CD4-positive, alpha-beta T cell (primary cell): ENCODE measurements at regions of chr13 and their contacts with region 1.

Region 1: GRCh38 chr13:111184458-111185401 is 69.6 kb downstream of the ARHGEF7 start:
- DNase-seq: peak in 13 of 14 experiments; percentile 19 to 73 (median 45)
- ATAC-seq: peak; percentile 55
- H3K4me3 ChIP-seq: peak overlapping the region; percentile 15
- H3K4me3 Mint-ChIP-seq: peak overlapping the region; percentile 78
- H3K27ac ChIP-seq: peak overlapping the region; percentile 46 to 58
- H3K27ac Mint-ChIP-seq: peak overlapping the region; percentile 94
- H3K4me1 ChIP-seq: peaks cover 89% of the 10 kb centered on the region
- H3K4me1 Mint-ChIP-seq: peaks cover 98% of the 10 kb centered on the region
- H3K27me3 ChIP-seq: no peaks in the 10 kb centered on the region
- H3K27me3 Mint-ChIP-seq: no peaks in the 10 kb centered on the region
- CTCF ChIP-seq: no peak

Region 2: DNA sequence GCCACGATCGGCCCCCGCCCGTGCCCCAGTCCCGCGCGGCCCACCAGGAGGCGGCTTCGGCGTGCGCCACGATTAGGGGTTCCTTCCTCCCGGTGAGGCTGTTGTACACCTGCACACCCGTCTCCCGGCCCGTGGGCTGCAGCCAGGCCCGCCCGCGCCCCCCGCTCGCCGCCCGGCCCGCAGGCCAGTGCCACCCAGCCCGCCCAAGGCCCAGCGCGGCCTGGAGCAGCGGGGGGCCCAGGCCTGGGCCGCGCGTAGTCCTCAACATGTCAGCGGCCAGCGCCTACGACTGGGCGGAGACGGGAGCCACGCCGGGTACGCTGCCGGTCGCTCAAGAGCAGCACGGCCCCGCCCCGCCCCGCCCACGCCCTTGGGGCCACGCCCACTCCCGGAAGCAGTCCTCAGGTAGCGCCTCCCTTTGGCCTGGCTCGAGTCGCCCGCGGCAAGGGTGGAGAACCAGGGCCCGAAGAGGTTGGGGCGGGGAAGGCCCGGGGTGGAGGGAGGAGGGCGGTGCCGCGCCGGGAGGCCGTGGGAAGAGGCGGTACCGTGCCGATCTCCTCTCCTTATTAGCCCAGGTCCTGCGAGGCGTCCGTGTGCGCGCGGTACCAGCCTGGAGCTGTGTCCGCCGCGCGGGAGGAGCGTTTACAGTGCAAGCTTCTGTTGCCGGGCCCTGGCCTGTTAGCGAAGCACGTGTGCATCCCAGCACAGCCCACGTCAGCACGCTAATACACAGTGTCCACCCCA is 478.7 kb before region 1 on chr13 and contains the start of gene CARS2:
- CTCF ChIA-PET with region 1: no interaction called
- POLR2A ChIA-PET with region 1: no interaction called
- intact Hi-C with region 1: loop called in 1 of 2 experiments (anchors 10 kb)
- DNase-seq: peak; percentile 83 to 98 (median 91)
- ATAC-seq: peak; percentile 91
- H3K4me3 ChIP-seq: peak within 1 kb of the TSS; percentile 71
- H3K4me3 Mint-ChIP-seq: peak within 1 kb of the TSS; percentile 94
- H3K27ac ChIP-seq: peak within 1 kb of the TSS in 1 of 2 donors; percentile 35
- H3K27ac Mint-ChIP-seq: peak within 1 kb of the TSS; percentile 92
- H3K4me1 ChIP-seq: peaks cover 41% of the 10 kb centered on the region
- H3K4me1 Mint-ChIP-seq: peaks cover 43% of the 10 kb centered on the region
- H3K27me3 ChIP-seq: no peaks in the 10 kb centered on the region
- H3K27me3 Mint-ChIP-seq: no peaks in the 10 kb centered on the region
- CTCF ChIP-seq: no peak
- total RNA-seq, gene CARS2: 50.2 to 56.5 TPM

Region 3: DNA sequence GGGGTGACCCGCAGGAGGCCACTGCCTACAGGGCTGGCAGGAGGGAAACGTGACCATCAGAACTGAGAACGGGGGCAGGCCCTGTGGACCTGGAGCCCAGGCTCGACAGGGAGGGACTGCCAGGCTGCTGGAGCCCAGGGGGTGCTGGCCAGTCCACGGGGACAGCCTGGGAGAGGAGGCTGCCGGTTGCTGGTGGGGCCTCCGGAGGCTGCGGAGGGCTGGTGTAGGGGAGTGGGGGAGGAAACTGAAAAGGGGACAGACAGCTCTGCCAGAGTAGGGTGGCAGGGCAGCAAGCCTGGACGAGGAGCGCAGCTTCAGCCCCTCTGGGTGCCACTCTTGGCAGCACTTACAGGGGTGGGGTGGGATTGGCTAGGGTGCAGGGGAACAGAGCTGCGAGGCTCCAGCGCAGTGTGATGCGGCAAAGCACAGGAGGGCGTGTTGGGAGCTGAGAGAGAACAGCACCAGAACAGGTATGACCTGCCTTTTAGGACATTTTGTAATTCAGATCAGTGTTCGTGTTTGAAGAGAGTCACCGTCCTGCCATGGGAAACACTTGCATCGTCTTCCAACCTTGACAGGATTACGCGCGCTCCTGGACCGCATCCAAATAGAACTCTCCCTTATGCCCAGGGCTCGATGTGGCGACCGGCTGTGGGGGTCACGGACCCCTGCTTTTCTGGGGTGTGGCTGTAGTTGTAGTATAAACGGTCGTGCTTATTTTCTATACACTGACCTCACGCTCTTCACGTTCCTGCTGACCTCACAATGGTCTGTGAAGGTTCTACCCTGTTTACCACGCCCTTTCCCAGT is 89.5 kb before region 1 on chr13:
- CTCF ChIA-PET with region 1: no interaction called
- POLR2A ChIA-PET with region 1: no interaction called
- intact Hi-C with region 1: no loop called
- DNase-seq: no peak
- ATAC-seq: no peak
- H3K4me3 ChIP-seq: no peak overlapping the region
- H3K4me3 Mint-ChIP-seq: no peak overlapping the region
- H3K27ac ChIP-seq: no peak overlapping the region
- H3K27ac Mint-ChIP-seq: no peak overlapping the region
- H3K4me1 ChIP-seq: no peaks in the 10 kb centered on the region
- H3K4me1 Mint-ChIP-seq: no peaks in the 10 kb centered on the region
- H3K27me3 ChIP-seq: peaks cover 0 to 12% of the 10 kb centered on the region in 2 experiments
- H3K27me3 Mint-ChIP-seq: peaks cover 77% of the 10 kb centered on the region
- CTCF ChIP-seq: no peak

Region 4: GRCh38 chr13:111202745-111203144 is 18.0 kb after region 1 on chr13:
- CTCF ChIA-PET with region 1: interaction called, 3 read pairs
- POLR2A ChIA-PET with region 1: interaction called, 17 read pairs
- intact Hi-C with region 1: loop called in 1 of 2 experiments (anchors 2 kb)
- DNase-seq: peak in 5 of 14 experiments; percentile 34 to 61 (median 50)
- ATAC-seq: peak; percentile 91
- H3K4me3 ChIP-seq: no peak overlapping the region
- H3K4me3 Mint-ChIP-seq: peak overlapping the region; percentile 68
- H3K27ac ChIP-seq: no peak overlapping the region
- H3K27ac Mint-ChIP-seq: peak overlapping the region; percentile 88
- H3K4me1 ChIP-seq: peaks cover 38% of the 10 kb centered on the region
- H3K4me1 Mint-ChIP-seq: peaks cover 82% of the 10 kb centered on the region
- H3K27me3 ChIP-seq: no peaks in the 10 kb centered on the region
- H3K27me3 Mint-ChIP-seq: no peaks in the 10 kb centered on the region
- CTCF ChIP-seq: no peak

Region 5: GRCh38 chr13:111216166-111216960 is 31.6 kb after region 1 on chr13:
- CTCF ChIA-PET with region 1: interaction called, 6 read pairs
- POLR2A ChIA-PET with region 1: interaction called, 5 read pairs
- intact Hi-C with region 1: loop called in 1 of 2 experiments (anchors 5 kb)
- DNase-seq: peak; percentile 19 to 68 (median 38)
- ATAC-seq: peak; percentile 69
- H3K4me3 ChIP-seq: no peak overlapping the region
- H3K4me3 Mint-ChIP-seq: no peak overlapping the region
- H3K27ac ChIP-seq: no peak overlapping the region
- H3K27ac Mint-ChIP-seq: peak overlapping the region; percentile 73
- H3K4me1 ChIP-seq: peaks cover 7% of the 10 kb centered on the region
- H3K4me1 Mint-ChIP-seq: peaks cover 64% of the 10 kb centered on the region
- H3K27me3 ChIP-seq: no peaks in the 10 kb centered on the region
- H3K27me3 Mint-ChIP-seq: no peaks in the 10 kb centered on the region
- CTCF ChIP-seq: peak; percentile 65